ENCODE measurements at regions of chr6 and their contacts with region 1.

Region 1: DNA sequence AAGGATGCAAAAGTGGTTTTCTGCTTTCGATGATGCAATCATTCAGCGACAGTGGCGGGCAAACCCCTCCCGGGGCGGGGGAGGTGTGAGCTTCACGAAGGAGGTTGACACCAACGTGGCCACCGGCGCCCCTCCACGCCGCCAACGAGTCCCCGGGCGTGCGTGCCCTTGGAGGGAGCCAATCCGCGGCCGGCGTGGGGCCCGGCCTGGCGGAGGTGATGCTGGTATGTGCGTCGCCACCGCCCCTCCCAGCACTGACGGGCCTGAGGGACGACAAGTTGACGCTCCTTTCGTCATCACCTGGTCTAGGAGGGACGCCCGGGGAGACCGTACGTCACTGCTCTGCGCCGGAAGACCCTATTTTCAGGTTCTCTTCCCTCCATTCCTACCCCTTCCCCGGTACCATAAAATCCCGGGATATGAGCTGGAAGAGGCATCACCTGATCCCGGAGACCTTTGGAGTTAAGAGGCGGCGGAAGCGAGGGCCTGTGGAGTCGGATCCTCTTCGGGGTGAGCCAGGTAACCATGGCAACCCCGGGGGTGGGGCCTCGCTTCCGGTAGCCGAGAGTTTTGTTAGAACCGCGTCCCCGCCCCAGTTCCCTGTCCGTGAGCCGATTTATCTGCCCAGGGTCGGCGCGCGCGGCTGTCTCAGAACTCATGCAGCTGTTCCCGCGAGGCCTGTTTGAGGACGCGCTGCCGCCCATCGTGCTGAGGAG is at the start of gene DXO:
- DNase-seq: peak; percentile 97
- ATAC-seq: peak; percentile 92
- H3K4me3 Mint-ChIP-seq: peak within 1 kb of the TSS; percentile 95
- H3K27ac Mint-ChIP-seq: peak within 1 kb of the TSS; percentile 100
- H3K4me1 Mint-ChIP-seq: peaks cover 37% of the 10 kb centered on the region
- H3K27me3 Mint-ChIP-seq: no peaks in the 10 kb centered on the region
- total RNA-seq, gene DXO: 14.8 to 17.7 TPM

Region 2: GRCh38 chr6:30883685-30884520 is 1088.2 kb before region 1 on chr6 and contains the start of gene DDR1:
- CTCF ChIA-PET with region 1: no interaction called
- POLR2A ChIA-PET with region 1: no interaction called
- DNase-seq: peak; percentile 57
- ATAC-seq: peak; percentile 85
- H3K4me3 Mint-ChIP-seq: peak within 1 kb of the TSS; percentile 73
- H3K27ac Mint-ChIP-seq: peak within 1 kb of the TSS; percentile 21
- H3K4me1 Mint-ChIP-seq: peaks cover 31% of the 10 kb centered on the region
- H3K27me3 Mint-ChIP-seq: peaks cover 10% of the 10 kb centered on the region
- total RNA-seq, gene DDR1: 6.3 to 7.4 TPM

Region 3: GRCh38 chr6:31952140-31952805 is 19.9 kb before region 1 on chr6:
- CTCF ChIA-PET with region 1: interaction called, 15 read pairs
- POLR2A ChIA-PET with region 1: interaction called, 68 read pairs
- DNase-seq: peak; percentile 55
- ATAC-seq: peak; percentile 52
- H3K4me3 Mint-ChIP-seq: no peak overlapping the region
- H3K27ac Mint-ChIP-seq: no peak overlapping the region
- H3K4me1 Mint-ChIP-seq: peaks cover 3% of the 10 kb centered on the region
- H3K27me3 Mint-ChIP-seq: no peaks in the 10 kb centered on the region

Region 4: DNA sequence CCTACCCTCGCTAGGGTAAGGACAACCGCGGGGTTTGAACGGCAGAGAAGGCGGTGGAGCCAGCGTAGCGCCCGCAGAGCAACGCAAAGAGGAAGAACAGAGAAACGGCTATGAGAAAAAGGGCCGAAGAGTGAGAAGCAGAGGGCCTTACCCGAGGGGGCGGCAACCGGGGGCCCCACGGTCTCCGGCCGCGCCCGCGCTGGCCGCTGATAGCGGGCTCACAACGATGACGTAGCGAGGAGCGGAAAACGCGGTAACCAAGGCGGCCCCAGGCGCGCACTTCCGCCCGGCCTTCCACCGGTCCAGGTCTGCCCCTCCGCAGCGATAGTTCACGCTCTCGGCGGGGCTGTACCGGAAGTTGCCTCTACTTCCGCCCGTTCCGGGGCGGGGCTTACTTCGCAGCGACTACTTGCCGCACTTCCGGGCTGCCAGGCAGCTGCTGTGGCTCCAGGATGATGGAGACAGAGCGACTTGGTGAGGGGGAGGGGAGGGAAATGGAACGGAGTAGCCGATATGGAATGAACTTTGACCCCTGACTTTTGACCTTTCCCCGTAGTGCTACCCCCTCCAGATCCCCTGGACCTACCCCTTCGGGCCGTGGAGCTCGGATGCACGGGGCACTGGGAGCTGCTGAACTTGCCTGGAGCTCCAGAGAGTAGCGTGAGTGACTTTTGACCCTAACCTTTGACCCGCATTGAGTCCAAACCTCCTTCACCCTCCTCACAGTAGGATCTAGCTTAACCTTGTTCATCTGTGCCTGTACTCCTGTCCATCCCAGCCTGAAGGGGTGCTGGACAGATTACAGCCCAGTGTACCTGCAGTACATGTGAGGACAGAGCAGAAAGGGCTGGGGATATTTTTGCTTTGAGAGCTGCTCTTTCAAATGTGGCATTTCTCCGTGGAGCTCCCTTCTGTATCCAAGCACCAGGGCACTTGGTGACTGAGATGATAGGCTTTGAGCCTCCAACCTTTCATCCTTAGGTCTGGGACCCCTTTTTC is 13.1 kb before region 1 on chr6 and contains the starts of genes NELFE and SKIC2:
- CTCF ChIA-PET with region 1: interaction called, 14 read pairs
- POLR2A ChIA-PET with region 1: interaction called, 68 read pairs
- DNase-seq: peak; percentile 99
- ATAC-seq: peak; percentile 96
- H3K4me3 Mint-ChIP-seq: peak within 1 kb of the TSS; percentile 98
- H3K27ac Mint-ChIP-seq: peak within 1 kb of the TSS; percentile 99
- H3K4me1 Mint-ChIP-seq: peaks cover 35% of the 10 kb centered on the region
- H3K27me3 Mint-ChIP-seq: no peaks in the 10 kb centered on the region
- total RNA-seq, gene NELFE: 67.1 to 70.8 TPM
- total RNA-seq, gene SKIC2: 73.2 to 73.4 TPM